Heart left ventricle (tissue), 16 donors: ENCODE measurements at regions of chr13 and their contacts with region 1.

Region 1: GRCh38 chr13:111114362-111115060 is 599 bp upstream of the ARHGEF7 start:
- DNase-seq: peak; percentile 46 to 79 (median 61)
- ATAC-seq: peak in 3 of 4 donors; percentile 69 to 78 (median 70)
- H3K4me3 ChIP-seq: peak overlapping the region; percentile 39 to 78 (median 64)
- H3K27ac ChIP-seq: peak overlapping the region; percentile 20 to 88 (median 78)
- H3K4me1 ChIP-seq: peaks cover 0 to 22% (median 9%) of the 10 kb centered on the region in 12 donors
- H3K27me3 ChIP-seq: peaks cover 0 to 68% (median 5%) of the 10 kb centered on the region in 9 donors
- CTCF ChIP-seq: no peak
- POLR2A ChIP-seq: no peak

Region 2: GRCh38 chr13:111216166-111216960 is 101.9 kb after region 1 on chr13:
- intact Hi-C with region 1: loop called in 1 of 10 experiments (anchors 5 kb)
- DNase-seq: peak in 1 of 5 donors; percentile 37
- ATAC-seq: peak; percentile 40 to 61 (median 43)
- H3K4me3 ChIP-seq: no peak overlapping the region
- H3K27ac ChIP-seq: peak overlapping the region in 9 of 12 donors; percentile 8 to 65 (median 22)
- H3K4me1 ChIP-seq: peaks cover 0 to 92% (median 73%) of the 10 kb centered on the region in 12 donors
- H3K27me3 ChIP-seq: no peaks in the 10 kb centered on the region
- CTCF ChIP-seq: peak in 11 of 12 donors; percentile 19 to 57 (median 42)
- POLR2A ChIP-seq: no peak